Activated B cell treated with CpG ODN at 0.5 μM for 24 hours (primary cell): ENCODE measurements at regions of chr6 and their contacts with region 1.

Region 1: DNA sequence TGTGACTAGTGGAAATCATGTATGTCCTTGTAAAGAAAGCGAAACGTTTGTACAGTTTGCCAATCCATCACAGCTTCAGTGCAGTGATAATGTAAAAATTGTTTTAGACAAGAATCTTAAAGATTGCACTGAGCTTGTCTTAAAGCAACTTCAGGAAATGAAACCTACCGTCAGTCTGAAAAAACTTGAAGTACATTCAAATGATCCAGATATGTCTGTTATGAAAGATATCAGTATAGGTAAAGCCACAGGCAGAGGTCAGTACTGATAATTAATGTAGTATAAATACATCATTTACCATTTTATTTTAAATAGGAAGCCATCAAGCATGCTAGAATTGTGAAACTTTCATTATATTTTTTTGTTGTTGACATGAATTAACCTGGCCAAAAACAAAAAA is 60.9 kb upstream of the SMIM8 start:
- DNase-seq: no peak
- ATAC-seq: no peak
- H3K4me3 Mint-ChIP-seq: no peak overlapping the region
- H3K27ac Mint-ChIP-seq: no peak overlapping the region
- H3K4me1 Mint-ChIP-seq: peaks cover 15% of the 10 kb centered on the region
- H3K27me3 Mint-ChIP-seq: no peaks in the 10 kb centered on the region
- CTCF ChIP-seq: no peak

Region 2: GRCh38 chr6:87322304-87323212 is 61.0 kb after region 1 on chr6 and contains the start of gene SMIM8:
- CTCF ChIA-PET with region 1: no interaction called
- POLR2A ChIA-PET with region 1: no interaction called
- intact Hi-C with region 1: loop called (anchors 5 kb)
- DNase-seq: peak; percentile 89
- ATAC-seq: peak; percentile 100
- H3K4me3 Mint-ChIP-seq: peak within 1 kb of the TSS; percentile 98
- H3K27ac Mint-ChIP-seq: peak within 1 kb of the TSS; percentile 90
- H3K4me1 Mint-ChIP-seq: peaks cover 25% of the 10 kb centered on the region
- H3K27me3 Mint-ChIP-seq: no peaks in the 10 kb centered on the region
- CTCF ChIP-seq: peak; percentile 79
- total RNA-seq, gene SMIM8: 11.1 and 14.4 TPM in 2 replicates